Dorsolateral prefrontal cortex (tissue), 120 donors: ENCODE measurements at regions of chr16 and their contacts with region 1.

Region 1: GRCh38 chr16:11742539-11743307 is at the start of gene TXNDC11:
- DNase-seq: peak; percentile 98 to 100 (median 98)
- H3K4me3 ChIP-seq: peak within 1 kb of the TSS; percentile 62 to 98 (median 92)
- H3K27ac ChIP-seq: peak within 1 kb of the TSS; percentile 35 to 97 (median 93)
- H3K27me3 ChIP-seq: no peaks in the 10 kb centered on the region
- CTCF ChIP-seq: peak in 22 of 56 donors; percentile 6 to 53 (median 24)
- total RNA-seq, gene TXNDC11: 16.0 to 38.5 (median 26.0) TPM

Region 2: GRCh38 chr16:11546608-11547061 is 196.1 kb before region 1 on chr16:
- intact Hi-C with region 1: no loop called
- DNase-seq: no peak
- H3K4me3 ChIP-seq: peak overlapping the region in 6 of 59 donors; percentile 8 to 44 (median 26)
- H3K27ac ChIP-seq: peak overlapping the region; percentile 73 to 98 (median 93)
- H3K27me3 ChIP-seq: no peaks in the 10 kb centered on the region
- CTCF ChIP-seq: no peak

Region 3: DNA sequence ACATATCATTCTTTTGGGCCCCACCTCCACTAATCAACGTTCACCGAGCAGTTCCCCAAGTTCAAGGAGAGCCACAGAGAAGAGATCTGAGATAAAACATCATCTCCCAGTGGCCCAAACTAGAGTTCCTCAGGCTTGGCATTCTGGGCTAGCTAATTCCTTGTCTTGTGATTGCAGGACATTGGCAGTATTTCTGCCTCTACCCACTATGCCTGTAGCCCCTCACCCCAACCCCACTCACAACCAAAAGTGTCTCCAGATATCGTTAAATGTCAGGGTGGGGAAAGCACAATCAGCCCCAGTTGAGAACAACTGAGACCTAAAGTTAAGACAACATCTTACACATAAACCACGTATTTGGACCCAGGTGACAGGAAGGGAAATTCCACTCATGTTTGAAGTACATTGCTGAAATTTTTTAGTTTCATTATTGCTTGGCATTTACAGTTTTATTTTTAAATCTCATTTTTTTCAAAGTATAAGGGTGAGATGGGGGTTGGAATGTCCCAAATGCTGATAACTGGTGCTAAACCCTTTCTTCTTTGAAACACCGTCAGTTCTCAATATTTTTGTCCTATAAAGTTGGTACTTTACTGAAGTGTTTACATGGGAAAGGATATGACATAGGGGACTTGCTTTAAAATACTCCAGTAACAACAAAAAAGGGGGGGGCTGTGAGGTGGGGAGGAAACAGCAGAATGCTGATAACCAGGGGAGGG is 40.8 kb after region 1 on chr16:
- intact Hi-C with region 1: loop called (anchors 5 kb)
- DNase-seq: no peak
- H3K4me3 ChIP-seq: peak overlapping the region in 20 of 59 donors; percentile 0 to 38 (median 18)
- H3K27ac ChIP-seq: peak overlapping the region in 56 of 59 donors; percentile 16 to 87 (median 72)
- H3K27me3 ChIP-seq: no peaks in the 10 kb centered on the region
- CTCF ChIP-seq: no peak